Natural killer cell (primary cell): ENCODE measurements at regions of chrX and their contacts with region 1.

Region 1: GRCh38 chrX:129982274-129983251 is at the start of gene BCORL1:
- DNase-seq: peak; percentile 71 to 93
- ATAC-seq: peak; percentile 91 to 98 (median 93)
- H3K4me3 ChIP-seq: no peak within 1 kb of the TSS
- H3K4me3 Mint-ChIP-seq: no peak within 1 kb of the TSS
- H3K27ac ChIP-seq: peak within 1 kb of the TSS; percentile 48
- H3K27ac Mint-ChIP-seq: peak within 1 kb of the TSS; percentile 47 to 48
- H3K4me1 ChIP-seq: peaks cover 27% of the 10 kb centered on the region
- H3K4me1 Mint-ChIP-seq: peaks cover 7 to 23% of the 10 kb centered on the region in 2 donors
- H3K27me3 ChIP-seq: no peaks in the 10 kb centered on the region
- H3K27me3 Mint-ChIP-seq: no peaks in the 10 kb centered on the region
- CTCF ChIP-seq: no peak
- total RNA-seq, gene BCORL1: 6.5 to 10.5 (median 9.9) TPM

Region 2: DNA sequence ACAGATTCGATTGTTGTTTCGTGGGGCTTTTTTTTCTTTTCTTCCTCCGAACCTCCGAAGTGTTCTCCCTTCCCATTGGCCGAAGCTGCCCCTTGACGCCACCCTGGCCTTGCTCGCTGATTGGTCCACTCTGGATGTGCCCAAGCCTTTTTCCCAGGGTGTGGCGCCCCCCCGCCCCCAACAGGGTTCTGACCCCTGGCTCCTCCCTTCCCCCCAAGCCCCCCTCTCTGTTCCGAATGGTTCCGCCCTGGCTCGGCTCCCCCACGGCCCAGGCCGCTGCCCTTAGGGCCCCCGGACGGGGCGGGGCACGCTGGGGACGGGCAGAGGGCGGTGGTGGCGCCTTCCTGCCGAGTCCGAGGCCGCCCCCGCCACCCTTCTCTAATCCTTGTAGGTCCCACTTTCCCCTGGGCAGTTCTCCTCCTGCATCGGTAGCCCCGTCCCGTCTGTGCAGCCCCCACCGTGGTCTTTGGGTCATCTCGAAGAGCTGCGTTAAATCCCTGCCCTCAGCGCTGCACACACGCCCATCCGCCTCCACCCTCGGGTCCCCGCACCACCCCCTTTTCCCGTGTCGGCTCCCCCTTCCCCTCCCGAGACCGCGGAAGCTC is 51.0 kb before region 1 on chrX:
- intact Hi-C with region 1: loop called (anchors 5 kb)
- DNase-seq: peak; percentile 33 to 76
- ATAC-seq: peak; percentile 64 to 80 (median 68)
- H3K4me3 ChIP-seq: peak overlapping the region; percentile 75
- H3K4me3 Mint-ChIP-seq: peak overlapping the region; percentile 85
- H3K27ac ChIP-seq: peak overlapping the region; percentile 78
- H3K27ac Mint-ChIP-seq: peak overlapping the region; percentile 80 to 84
- H3K4me1 ChIP-seq: peaks cover 7% of the 10 kb centered on the region
- H3K4me1 Mint-ChIP-seq: peaks cover 0 to 5% of the 10 kb centered on the region in 2 donors
- H3K27me3 ChIP-seq: no peaks in the 10 kb centered on the region
- H3K27me3 Mint-ChIP-seq: no peaks in the 10 kb centered on the region
- CTCF ChIP-seq: no peak

Region 3: DNA sequence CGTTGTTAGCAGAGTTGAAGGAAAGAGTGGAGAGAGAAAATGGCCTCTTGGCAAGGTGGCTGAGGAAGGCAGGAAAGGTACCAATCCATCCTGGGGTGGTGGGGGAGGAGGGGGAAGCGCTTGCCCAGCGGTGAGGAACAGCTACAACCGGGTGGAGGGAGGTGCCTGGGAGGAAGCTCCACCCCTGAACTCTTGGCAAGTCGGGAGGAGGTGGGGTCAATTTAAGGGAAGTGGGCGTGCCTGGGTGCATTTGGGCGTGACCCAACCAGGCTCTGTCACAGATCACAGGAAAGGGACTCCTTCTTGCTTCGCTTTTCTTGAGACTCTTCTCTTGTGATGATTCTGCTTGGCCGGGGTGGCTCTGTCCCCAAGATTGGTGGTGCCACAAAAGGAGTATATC is 41.6 kb after region 1 on chrX:
- intact Hi-C with region 1: loop called (anchors 1 kb)
- DNase-seq: peak; percentile 68 to 91
- ATAC-seq: peak; percentile 99 to 100 (median 100)
- H3K4me3 ChIP-seq: no peak overlapping the region
- H3K4me3 Mint-ChIP-seq: peak overlapping the region; percentile 71
- H3K27ac ChIP-seq: peak overlapping the region; percentile 45
- H3K27ac Mint-ChIP-seq: peak overlapping the region; percentile 49 to 83
- H3K4me1 ChIP-seq: peaks cover 12% of the 10 kb centered on the region
- H3K4me1 Mint-ChIP-seq: peaks cover 13% of the 10 kb centered on the region in 2 donors
- H3K27me3 ChIP-seq: no peaks in the 10 kb centered on the region
- H3K27me3 Mint-ChIP-seq: no peaks in the 10 kb centered on the region
- CTCF ChIP-seq: no peak